Panc1 (cell line): ENCODE measurements at regions of chr16 and their contacts with region 1.

Region 1: DNA sequence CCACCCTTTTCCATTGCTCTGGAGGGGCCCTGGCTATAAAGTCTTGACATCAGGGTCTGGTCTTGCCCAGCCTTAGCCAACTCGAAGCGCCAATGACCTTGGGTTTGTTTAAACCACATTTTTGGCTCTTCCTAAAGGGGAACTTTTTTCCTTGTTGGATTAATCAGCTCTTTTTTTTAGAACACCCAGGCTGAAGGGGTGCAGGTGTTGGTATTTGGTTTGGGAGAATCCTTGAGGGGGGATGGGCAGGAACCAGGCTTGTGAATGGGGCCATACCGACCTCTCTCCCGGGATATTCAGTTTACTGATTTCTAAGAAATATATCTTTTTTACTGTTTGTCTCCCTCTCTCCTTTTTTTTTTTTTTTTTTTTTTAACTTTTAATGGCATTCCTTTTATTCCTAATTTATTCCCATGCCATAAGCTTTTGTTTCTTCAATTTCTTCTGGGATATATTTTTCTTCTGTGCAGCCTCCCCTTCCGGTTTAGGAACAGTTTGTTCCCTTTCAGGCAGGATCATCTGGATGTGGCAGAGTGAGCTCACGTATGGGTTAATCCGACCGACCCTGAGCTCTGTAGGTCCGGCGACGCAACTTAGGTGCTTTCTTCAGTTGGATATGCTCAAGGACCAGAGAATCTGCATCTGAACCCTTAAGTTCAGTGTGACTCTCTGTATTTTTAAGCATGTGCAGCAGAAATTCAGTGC is 129.5 kb downstream of the ABCC6 start:
- DNase-seq: no peak
- ATAC-seq: no peak
- H3K4me3 ChIP-seq: no peak overlapping the region
- H3K27ac ChIP-seq: no peak overlapping the region
- H3K4me1 ChIP-seq: peaks cover 26% of the 10 kb centered on the region
- H3K27me3 ChIP-seq: no peaks in the 10 kb centered on the region
- CTCF ChIP-seq: no peak

Region 2: GRCh38 chr16:16191493-16192167 is 97.8 kb after region 1 on chr16:
- CTCF ChIA-PET with region 1: interaction called, 14 read pairs
- POLR2A ChIA-PET with region 1: no interaction called
- in situ Hi-C with region 1: no loop called
- intact Hi-C with region 1: no loop called
- DNase-seq: no peak
- ATAC-seq: no peak
- H3K4me3 ChIP-seq: no peak overlapping the region
- H3K27ac ChIP-seq: no peak overlapping the region
- H3K4me1 ChIP-seq: no peaks in the 10 kb centered on the region
- H3K27me3 ChIP-seq: no peaks in the 10 kb centered on the region
- CTCF ChIP-seq: no peak